Activated naive CD4-positive, alpha-beta T cell treated with anti-CD3 and anti-CD28 coated beads for 36 hours (primary cell): ENCODE measurements at regions of chr1 and their contacts with region 1.

Region 1: GRCh38 chr1:180178511-180179161 is 24.0 kb downstream of the QSOX1 start:
- DNase-seq: peak; percentile 79
- H3K4me3 Mint-ChIP-seq: no peak overlapping the region
- H3K27ac Mint-ChIP-seq: no peak overlapping the region
- H3K4me1 Mint-ChIP-seq: no peaks in the 10 kb centered on the region
- H3K27me3 Mint-ChIP-seq: no peaks in the 10 kb centered on the region

Region 2: GRCh38 chr1:179706339-179706941 is 472.2 kb before region 1 on chr1:
- CTCF ChIA-PET with region 1: interaction called, 29 read pairs
- intact Hi-C with region 1: loop called (anchors 1 kb)
- DNase-seq: peak; percentile 83
- H3K4me3 Mint-ChIP-seq: no peak overlapping the region
- H3K27ac Mint-ChIP-seq: no peak overlapping the region
- H3K4me1 Mint-ChIP-seq: peaks cover 23% of the 10 kb centered on the region
- H3K27me3 Mint-ChIP-seq: no peaks in the 10 kb centered on the region

Region 3: DNA sequence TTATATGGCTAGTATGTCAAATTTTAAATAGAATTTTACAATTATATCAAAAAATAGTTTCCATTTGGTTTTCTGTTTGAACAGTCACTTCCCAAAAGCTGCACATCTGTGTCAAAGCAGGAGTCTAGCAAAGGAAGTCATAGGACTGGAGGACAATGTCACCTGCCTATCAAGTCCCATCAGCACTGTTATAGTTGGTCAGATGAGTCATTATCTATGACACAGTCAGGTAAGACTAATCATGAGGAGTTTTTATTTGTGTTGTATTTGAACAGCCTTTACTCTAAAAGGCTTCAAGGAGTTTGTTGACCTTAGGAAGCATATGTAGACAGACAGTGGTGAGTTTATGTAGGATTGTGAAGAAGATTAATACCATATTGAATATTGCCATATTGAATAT is 98.2 kb before region 1 on chr1:
- CTCF ChIA-PET with region 1: interaction called, 3 read pairs
- intact Hi-C with region 1: loop called (anchors 5 kb)
- DNase-seq: peak; percentile 8
- H3K4me3 Mint-ChIP-seq: no peak overlapping the region
- H3K27ac Mint-ChIP-seq: no peak overlapping the region
- H3K4me1 Mint-ChIP-seq: peaks cover 2% of the 10 kb centered on the region
- H3K27me3 Mint-ChIP-seq: no peaks in the 10 kb centered on the region

Region 4: GRCh38 chr1:180201451-180202200 is 23.0 kb after region 1 on chr1:
- CTCF ChIA-PET with region 1: interaction called, 14 read pairs
- intact Hi-C with region 1: no loop called
- DNase-seq: no peak
- H3K4me3 Mint-ChIP-seq: no peak overlapping the region
- H3K27ac Mint-ChIP-seq: no peak overlapping the region
- H3K4me1 Mint-ChIP-seq: no peaks in the 10 kb centered on the region
- H3K27me3 Mint-ChIP-seq: no peaks in the 10 kb centered on the region

Region 5: GRCh38 chr1:180415985-180416633 is 237.5 kb after region 1 on chr1:
- CTCF ChIA-PET with region 1: interaction called, 6 read pairs
- intact Hi-C with region 1: loop called (anchors 2 kb)
- DNase-seq: no peak
- H3K4me3 Mint-ChIP-seq: no peak overlapping the region
- H3K27ac Mint-ChIP-seq: no peak overlapping the region
- H3K4me1 Mint-ChIP-seq: no peaks in the 10 kb centered on the region
- H3K27me3 Mint-ChIP-seq: no peaks in the 10 kb centered on the region